Caco-2 (cell line): ENCODE measurements at regions of chr13 and their contacts with region 1.

Region 1: DNA sequence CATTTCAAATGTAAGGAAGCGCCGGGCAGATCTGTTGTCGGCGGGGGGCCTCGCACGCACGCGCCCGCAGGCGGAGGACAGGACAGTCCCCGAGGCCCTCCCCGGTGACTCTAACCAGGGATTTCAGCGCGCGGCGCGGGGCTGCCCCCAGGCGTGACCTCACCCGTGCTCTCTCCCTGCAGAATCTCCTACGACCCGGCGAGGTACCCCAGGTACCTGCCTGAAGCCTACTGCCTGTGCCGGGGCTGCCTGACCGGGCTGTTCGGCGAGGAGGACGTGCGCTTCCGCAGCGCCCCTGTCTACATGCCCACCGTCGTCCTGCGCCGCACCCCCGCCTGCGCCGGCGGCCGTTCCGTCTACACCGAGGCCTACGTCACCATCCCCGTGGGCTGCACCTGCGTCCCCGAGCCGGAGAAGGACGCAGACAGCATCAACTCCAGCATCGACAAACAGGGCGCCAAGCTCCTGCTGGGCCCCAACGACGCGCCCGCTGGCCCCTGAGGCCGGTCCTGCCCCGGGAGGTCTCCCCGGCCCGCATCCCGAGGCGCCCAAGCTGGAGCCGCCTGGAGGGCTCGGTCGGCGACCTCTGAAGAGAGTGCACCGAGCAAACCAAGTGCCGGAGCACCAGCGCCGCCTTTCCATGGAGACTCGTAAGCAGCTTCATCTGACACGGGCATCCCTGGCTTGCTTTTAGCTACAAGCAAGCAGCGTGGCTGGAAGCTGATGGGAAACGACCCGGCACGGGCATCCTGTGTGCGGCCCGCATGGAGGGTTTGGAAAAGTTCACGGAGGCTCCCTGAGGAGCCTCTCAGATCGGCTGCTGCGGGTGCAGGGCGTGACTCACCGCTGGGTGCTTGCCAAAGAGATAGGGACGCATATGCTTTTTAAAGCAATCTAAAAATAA is 18.2 kb downstream of the IL17D start:
- DNase-seq: no peak
- H3K4me3 ChIP-seq: no peak overlapping the region
- H3K4me3 Mint-ChIP-seq: no peak overlapping the region
- H3K27ac Mint-ChIP-seq: no peak overlapping the region
- H3K4me1 ChIP-seq: peaks cover 8% of the 10 kb centered on the region; the same call in 1 of the 2 replicates
- H3K4me1 Mint-ChIP-seq: no peaks in the 10 kb centered on the region
- H3K27me3 ChIP-seq: no peaks in the 10 kb centered on the region
- H3K27me3 Mint-ChIP-seq: no peaks in the 10 kb centered on the region
- CTCF ChIP-seq: no peak

Region 2: DNA sequence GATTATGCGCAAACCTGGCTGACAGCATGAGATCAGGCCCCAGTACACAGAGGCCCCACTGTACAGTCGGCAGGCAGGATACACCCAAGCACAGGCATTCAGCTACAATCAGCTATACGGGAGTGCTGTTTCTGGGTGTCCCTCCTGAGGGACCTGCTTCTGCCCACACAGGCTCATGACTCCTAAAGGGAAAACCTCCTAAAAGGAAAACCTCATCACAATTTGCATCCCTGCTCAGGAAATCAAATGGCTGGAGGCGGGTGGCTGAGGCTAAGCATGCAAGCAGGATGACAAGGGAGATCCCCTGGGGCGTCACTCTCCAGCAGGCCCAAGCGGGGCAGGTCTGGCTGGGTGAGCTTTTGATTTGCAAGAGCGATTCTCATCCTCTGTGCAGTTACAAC is 295.9 kb before region 1 on chr13:
- CTCF ChIA-PET with region 1: no interaction called
- POLR2A ChIA-PET with region 1: no interaction called
- intact Hi-C with region 1: no loop called
- DNase-seq: no peak
- H3K4me3 ChIP-seq: no peak overlapping the region
- H3K4me3 Mint-ChIP-seq: no peak overlapping the region
- H3K27ac Mint-ChIP-seq: no peak overlapping the region
- H3K4me1 ChIP-seq: 0 out of 2 replicates have a peak, but pooled peaks cover 3% of the 10 kb centered on the region
- H3K4me1 Mint-ChIP-seq: no peaks in the 10 kb centered on the region
- H3K27me3 ChIP-seq: no peaks in the 10 kb centered on the region; the same call in 1 of the 2 replicates
- H3K27me3 Mint-ChIP-seq: peaks cover 3% of the 10 kb centered on the region
- CTCF ChIP-seq: no peak

Region 3: DNA sequence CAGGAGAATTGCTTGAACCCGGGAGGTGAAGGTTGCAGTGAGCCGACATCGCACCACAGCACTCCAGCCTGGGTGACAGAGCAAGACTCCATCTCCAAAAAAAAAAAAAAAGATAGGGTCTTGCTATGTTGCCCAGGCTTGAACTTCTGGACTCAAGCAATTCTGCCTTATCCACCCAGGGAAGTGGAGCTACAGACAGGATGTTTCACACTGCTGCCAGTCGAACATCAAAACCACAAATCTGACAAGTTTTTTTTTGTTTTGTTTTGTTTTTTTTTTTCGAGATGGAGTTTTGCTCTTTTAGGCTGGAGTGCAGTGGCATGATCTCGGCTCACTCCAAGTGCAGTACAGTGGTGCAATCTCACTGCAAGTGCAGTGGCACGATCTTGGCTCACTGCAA is 170.1 kb after region 1 on chr13:
- CTCF ChIA-PET with region 1: no interaction called
- POLR2A ChIA-PET with region 1: interaction called, 14 read pairs
- intact Hi-C with region 1: no loop called
- DNase-seq: no peak
- H3K4me3 ChIP-seq: no peak overlapping the region
- H3K4me3 Mint-ChIP-seq: no peak overlapping the region
- H3K27ac Mint-ChIP-seq: no peak overlapping the region
- H3K4me1 ChIP-seq: no peaks in the 10 kb centered on the region
- H3K4me1 Mint-ChIP-seq: no peaks in the 10 kb centered on the region
- H3K27me3 ChIP-seq: no peaks in the 10 kb centered on the region
- H3K27me3 Mint-ChIP-seq: no peaks in the 10 kb centered on the region
- CTCF ChIP-seq: no peak